ENCODE measurements at regions of chr7 and their contacts with region 1.

Region 1: GRCh38 chr7:78006063-78006755 is 207.6 kb downstream of the PHTF2 start:
- DNase-seq: no peak

Region 2: GRCh38 chr7:77935652-77936348 is 70.4 kb before region 1 on chr7:
- intact Hi-C with region 1: no loop called
- DNase-seq: no peak

Region 3: GRCh38 chr7:77954773-77955555 is 51.2 kb before region 1 on chr7:
- intact Hi-C with region 1: loop called in 1 of 2 experiments (anchors 10 kb)
- DNase-seq: no peak

Region 4: DNA sequence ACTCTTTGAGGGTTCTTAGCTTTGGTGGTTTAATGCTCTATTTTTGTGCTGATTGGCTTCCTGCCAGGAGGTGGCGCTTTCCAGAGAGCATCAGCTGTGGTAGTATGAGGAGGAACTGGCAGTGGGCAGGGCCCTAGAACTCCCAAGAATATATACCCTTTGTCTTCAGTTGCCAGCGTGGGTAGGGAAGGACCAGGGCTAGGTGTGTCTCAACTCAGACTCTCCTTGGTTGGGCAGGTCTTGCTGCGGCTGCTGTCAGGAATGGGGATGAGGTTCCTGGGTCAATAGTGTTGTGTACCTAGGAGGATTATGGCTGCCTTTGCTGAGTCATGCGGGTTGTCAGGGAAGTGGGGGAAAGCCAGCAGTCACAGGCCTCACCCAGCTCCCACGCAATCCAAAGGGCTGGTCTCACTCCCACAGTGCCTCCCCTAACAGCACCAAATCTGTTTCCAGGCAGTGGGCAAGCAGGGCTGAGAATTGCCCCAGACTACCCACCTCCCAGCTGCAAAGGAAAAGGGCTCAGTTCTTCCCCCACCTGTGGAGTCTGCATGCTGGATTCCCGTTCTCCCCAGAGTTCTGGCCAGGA is 16.1 kb before region 1 on chr7:
- intact Hi-C with region 1: no loop called
- DNase-seq: no peak

Measured in posterior vena cava (tissue), 2 donors.